Activated CD4-positive, alpha-beta memory T cell treated with anti-CD3 and anti-CD28 coated beads, Interleukin-2, amount 10 ng/mL, durations not matched to agents 7 days and 5 days (primary cell): ENCODE measurements at regions of chr5 and their contacts with region 1.

Region 1: GRCh38 chr5:392431-392988 is 50.5 kb upstream of the EXOC3 start:
- DNase-seq: peak; percentile 92
- H3K4me3 Mint-ChIP-seq: peak overlapping the region; percentile 58
- H3K27ac Mint-ChIP-seq: peak overlapping the region; percentile 89
- H3K4me1 Mint-ChIP-seq: peaks cover 37% of the 10 kb centered on the region
- H3K27me3 Mint-ChIP-seq: no peaks in the 10 kb centered on the region

Region 2: GRCh38 chr5:305050-305449 is 87.5 kb before region 1 on chr5:
- CTCF ChIA-PET with region 1: no interaction called
- POLR2A ChIA-PET with region 1: no interaction called
- DNase-seq: no peak
- H3K4me3 Mint-ChIP-seq: no peak overlapping the region
- H3K27ac Mint-ChIP-seq: no peak overlapping the region
- H3K4me1 Mint-ChIP-seq: no peaks in the 10 kb centered on the region
- H3K27me3 Mint-ChIP-seq: no peaks in the 10 kb centered on the region

Region 3: GRCh38 chr5:368183-369084 is 24.1 kb before region 1 on chr5:
- CTCF ChIA-PET with region 1: no interaction called
- POLR2A ChIA-PET with region 1: interaction called, 25 read pairs
- DNase-seq: peak; percentile 21
- H3K4me3 Mint-ChIP-seq: no peak overlapping the region
- H3K27ac Mint-ChIP-seq: peak overlapping the region; percentile 76
- H3K4me1 Mint-ChIP-seq: peaks cover 55% of the 10 kb centered on the region
- H3K27me3 Mint-ChIP-seq: no peaks in the 10 kb centered on the region